Left ventricle myocardium inferior (tissue), 1 donor: ENCODE measurements at regions of chr11 and their contacts with region 1.

Region 1: GRCh38 chr11:120482149-120482548 is 29.4 kb upstream of the GRIK4 start:
- DNase-seq: no peak
- H3K4me3 ChIP-seq: no peak overlapping the region
- H3K27ac ChIP-seq: no peak overlapping the region
- H3K4me1 ChIP-seq: peaks cover 31% of the 10 kb centered on the region
- H3K27me3 ChIP-seq: no peaks in the 10 kb centered on the region
- CTCF ChIP-seq: no peak

Region 2: GRCh38 chr11:120441592-120441991 is 40.6 kb before region 1 on chr11:
- intact Hi-C with region 1: loop called (anchors 5 kb)
- DNase-seq: no peak
- H3K4me3 ChIP-seq: no peak overlapping the region
- H3K27ac ChIP-seq: no peak overlapping the region
- H3K4me1 ChIP-seq: no peaks in the 10 kb centered on the region
- H3K27me3 ChIP-seq: no peaks in the 10 kb centered on the region
- CTCF ChIP-seq: no peak

Region 3: DNA sequence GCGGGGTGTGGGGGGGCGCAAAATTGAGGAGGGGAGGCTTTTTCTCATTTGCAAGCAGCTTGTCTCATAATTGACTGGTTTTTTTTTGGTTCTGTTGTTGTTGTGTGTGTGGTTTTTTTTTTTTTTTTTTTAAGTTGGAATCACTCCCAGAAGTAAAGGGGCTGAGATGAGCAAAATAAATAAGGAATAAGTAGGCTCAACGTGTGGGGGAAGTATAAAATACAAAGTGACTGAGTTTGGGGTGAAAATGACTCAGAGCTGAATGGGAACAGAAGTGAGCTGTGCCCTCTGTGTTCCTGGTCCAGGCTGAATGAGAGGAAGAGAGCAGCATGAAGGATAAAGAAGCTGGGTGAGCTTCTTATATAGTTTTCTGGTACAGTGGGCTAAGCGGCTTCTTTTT is 119.4 kb after region 1 on chr11:
- intact Hi-C with region 1: no loop called
- DNase-seq: no peak
- H3K4me3 ChIP-seq: no peak overlapping the region
- H3K27ac ChIP-seq: no peak overlapping the region
- H3K4me1 ChIP-seq: no peaks in the 10 kb centered on the region
- H3K27me3 ChIP-seq: peaks cover 49% of the 10 kb centered on the region
- CTCF ChIP-seq: no peak